ENCODE measurements at regions of chr16 and their contacts with region 1.

Region 1: GRCh38 chr16:67311607-67312488 is 14.7 kb downstream of the KCTD19 start:
- DNase-seq: peak; percentile 72
- ATAC-seq: peak; percentile 94
- H3K4me3 Mint-ChIP-seq: no peak overlapping the region
- H3K27ac Mint-ChIP-seq: peak overlapping the region; percentile 76
- H3K4me1 Mint-ChIP-seq: peaks cover 23% of the 10 kb centered on the region
- H3K27me3 Mint-ChIP-seq: no peaks in the 10 kb centered on the region

Region 2: DNA sequence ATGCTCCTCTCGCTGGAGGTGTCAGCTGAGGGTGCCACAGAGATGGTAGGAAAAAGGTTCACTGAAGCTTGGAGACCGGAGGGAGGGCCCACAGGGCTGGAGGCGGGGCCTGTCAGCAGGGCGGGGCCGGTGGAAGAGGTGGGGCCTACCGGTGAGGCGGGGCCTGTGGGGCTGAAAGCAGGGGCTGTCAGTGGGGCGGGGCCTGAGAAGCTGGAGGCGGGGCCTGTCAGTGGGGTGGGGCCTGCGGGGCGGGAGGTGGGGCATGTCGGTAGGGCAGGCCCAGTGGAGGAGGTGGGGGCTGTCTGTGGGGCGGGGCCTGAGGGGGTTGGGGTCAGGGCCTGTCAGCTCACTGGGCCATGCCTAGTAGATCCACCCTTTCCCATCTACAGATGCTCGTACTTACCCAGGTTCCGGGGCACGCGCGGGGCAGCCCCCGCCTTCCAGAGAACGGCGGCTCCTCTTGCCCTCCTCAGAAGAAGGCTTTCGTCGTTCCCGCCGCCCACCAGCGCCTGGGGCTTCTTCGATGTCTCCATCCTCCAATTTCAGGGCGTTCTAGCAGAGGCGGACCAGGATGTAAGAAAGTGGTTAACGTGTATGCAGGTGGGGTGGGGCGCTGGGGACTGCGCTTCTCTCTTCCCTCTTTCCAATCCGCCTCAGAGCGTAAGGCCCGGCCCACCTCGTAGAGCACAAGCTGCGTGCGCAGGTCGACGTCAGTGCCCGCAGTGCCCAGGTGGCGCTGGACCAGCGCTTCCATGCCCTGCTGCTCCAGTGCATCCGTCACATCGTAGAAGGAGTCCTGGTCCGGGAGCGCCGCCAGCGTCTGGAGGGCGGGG is 75.1 kb before region 1 on chr16:
- CTCF ChIA-PET with region 1: no interaction called
- POLR2A ChIA-PET with region 1: no interaction called
- DNase-seq: peak; percentile 80
- ATAC-seq: peak; percentile 85
- H3K4me3 Mint-ChIP-seq: peak overlapping the region; percentile 2
- H3K27ac Mint-ChIP-seq: peak overlapping the region; percentile 79
- H3K4me1 Mint-ChIP-seq: peaks cover 19% of the 10 kb centered on the region
- H3K27me3 Mint-ChIP-seq: no peaks in the 10 kb centered on the region

Region 3: GRCh38 chr16:67326472-67327309 is 14.8 kb after region 1 on chr16 and contains the starts of genes KCTD19 and LRRC36:
- CTCF ChIA-PET with region 1: interaction called, 17 read pairs
- POLR2A ChIA-PET with region 1: interaction called, 3 read pairs
- DNase-seq: peak; percentile 73
- ATAC-seq: peak; percentile 87
- H3K4me3 Mint-ChIP-seq: peak within 1 kb of the TSS; percentile 83
- H3K27ac Mint-ChIP-seq: peak within 1 kb of the TSS; percentile 54
- H3K4me1 Mint-ChIP-seq: peaks cover 11% of the 10 kb centered on the region
- H3K27me3 Mint-ChIP-seq: peaks cover 38% of the 10 kb centered on the region
- total RNA-seq, gene KCTD19: 0.65 to 1.1 TPM
- total RNA-seq, gene LRRC36: not detected